Activated CD4-positive, alpha-beta memory T cell treated with anti-CD3 and anti-CD28 coated beads for 36 hours (primary cell): ENCODE measurements at regions of chr5 and their contacts with region 1.

Region 1: GRCh38 chr5:5421961-5422818 is at the start of gene ICE1:
- DNase-seq: peak; percentile 96
- H3K4me3 Mint-ChIP-seq: peak within 1 kb of the TSS; percentile 96
- H3K27ac Mint-ChIP-seq: peak within 1 kb of the TSS; percentile 95
- H3K4me1 Mint-ChIP-seq: peaks cover 14% of the 10 kb centered on the region
- H3K27me3 Mint-ChIP-seq: no peaks in the 10 kb centered on the region
- total RNA-seq, gene ICE1: 25.5 to 26.0 TPM

Region 2: DNA sequence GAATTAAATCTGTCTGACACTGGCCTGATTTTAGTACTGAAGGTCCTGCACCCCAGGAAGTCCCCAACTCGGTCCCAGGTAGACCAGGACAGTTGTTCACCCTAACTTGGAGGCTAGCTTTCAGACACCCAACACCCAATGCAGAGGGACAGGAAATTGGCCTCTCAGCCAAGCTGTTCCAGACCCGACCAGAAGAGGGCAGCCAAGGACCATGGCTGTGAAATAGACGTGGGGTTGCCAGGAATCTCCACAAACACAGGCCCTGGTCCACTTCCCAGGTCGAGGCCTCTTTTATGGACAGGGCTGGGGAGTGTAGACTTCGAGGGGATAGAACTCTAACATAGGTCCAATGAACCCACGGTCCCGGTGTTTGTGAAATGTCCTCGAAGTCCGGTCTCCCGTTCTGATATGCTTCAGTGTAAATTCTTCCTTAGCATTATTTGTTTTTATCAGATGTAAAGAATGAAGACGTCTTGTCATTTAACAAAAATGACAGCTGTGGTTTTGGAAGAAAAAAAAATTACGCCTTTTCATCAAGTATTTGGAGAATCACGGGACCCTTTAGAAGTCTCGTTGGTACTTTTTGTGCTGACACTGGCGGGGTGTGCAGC is 542.4 kb before region 1 on chr5:
- CTCF ChIA-PET with region 1: no interaction called
- POLR2A ChIA-PET with region 1: no interaction called
- intact Hi-C with region 1: loop called (anchors 5 kb)
- DNase-seq: peak; percentile 45
- H3K4me3 Mint-ChIP-seq: no peak overlapping the region
- H3K27ac Mint-ChIP-seq: no peak overlapping the region
- H3K4me1 Mint-ChIP-seq: no peaks in the 10 kb centered on the region
- H3K27me3 Mint-ChIP-seq: no peaks in the 10 kb centered on the region

Region 3: DNA sequence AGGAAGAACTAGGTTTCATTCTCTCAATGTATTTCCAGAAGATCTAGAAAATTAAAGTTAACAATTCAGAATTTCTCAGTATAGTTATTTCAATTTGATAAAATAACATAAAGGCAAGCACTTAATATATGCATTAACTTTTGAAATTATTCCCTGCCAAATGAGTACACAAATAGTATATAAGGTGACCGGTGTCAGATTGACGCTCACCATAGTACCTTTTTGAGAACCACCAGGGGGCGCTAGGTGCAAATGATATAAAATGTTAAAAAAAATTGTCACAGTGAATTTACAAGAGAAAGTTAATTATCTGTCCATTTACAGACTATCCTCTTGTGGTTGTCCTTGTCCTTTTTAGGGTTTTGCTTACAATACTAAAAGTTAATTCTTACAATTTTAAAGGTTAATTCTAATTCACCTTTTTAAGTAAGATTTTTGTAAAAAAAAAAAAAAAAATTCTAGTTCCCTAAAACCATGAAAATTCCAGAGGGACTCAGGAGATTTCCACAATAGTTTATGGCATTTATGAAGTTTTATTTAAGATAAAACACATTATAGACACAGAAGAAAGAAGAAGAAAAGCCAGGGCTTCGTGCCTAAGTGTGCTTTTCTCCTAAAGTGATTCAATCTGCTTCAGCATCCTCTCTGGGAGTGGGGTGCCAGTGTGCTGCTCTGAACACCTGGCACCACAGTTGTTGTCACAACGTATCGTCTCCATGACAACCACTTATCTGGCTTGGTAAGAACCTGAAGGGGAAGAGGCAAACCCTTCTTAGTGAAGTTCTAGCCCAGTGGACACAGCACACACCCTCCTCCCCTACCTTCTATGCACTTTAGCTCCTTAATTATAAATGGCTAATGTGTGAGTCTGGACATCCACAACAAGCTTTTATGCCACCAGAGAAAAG is 280.3 kb before region 1 on chr5:
- CTCF ChIA-PET with region 1: interaction called, 9 read pairs
- POLR2A ChIA-PET with region 1: no interaction called
- intact Hi-C with region 1: loop called (anchors 1 kb)
- DNase-seq: peak; percentile 46
- H3K4me3 Mint-ChIP-seq: no peak overlapping the region
- H3K27ac Mint-ChIP-seq: no peak overlapping the region
- H3K4me1 Mint-ChIP-seq: peaks cover 8% of the 10 kb centered on the region
- H3K27me3 Mint-ChIP-seq: peaks cover 19% of the 10 kb centered on the region

Region 4: GRCh38 chr5:5409151-5409810 is 12.9 kb before region 1 on chr5:
- CTCF ChIA-PET with region 1: no interaction called
- POLR2A ChIA-PET with region 1: no interaction called
- intact Hi-C with region 1: no loop called
- DNase-seq: no peak
- H3K4me3 Mint-ChIP-seq: no peak overlapping the region
- H3K27ac Mint-ChIP-seq: no peak overlapping the region
- H3K4me1 Mint-ChIP-seq: no peaks in the 10 kb centered on the region
- H3K27me3 Mint-ChIP-seq: no peaks in the 10 kb centered on the region

Region 5: DNA sequence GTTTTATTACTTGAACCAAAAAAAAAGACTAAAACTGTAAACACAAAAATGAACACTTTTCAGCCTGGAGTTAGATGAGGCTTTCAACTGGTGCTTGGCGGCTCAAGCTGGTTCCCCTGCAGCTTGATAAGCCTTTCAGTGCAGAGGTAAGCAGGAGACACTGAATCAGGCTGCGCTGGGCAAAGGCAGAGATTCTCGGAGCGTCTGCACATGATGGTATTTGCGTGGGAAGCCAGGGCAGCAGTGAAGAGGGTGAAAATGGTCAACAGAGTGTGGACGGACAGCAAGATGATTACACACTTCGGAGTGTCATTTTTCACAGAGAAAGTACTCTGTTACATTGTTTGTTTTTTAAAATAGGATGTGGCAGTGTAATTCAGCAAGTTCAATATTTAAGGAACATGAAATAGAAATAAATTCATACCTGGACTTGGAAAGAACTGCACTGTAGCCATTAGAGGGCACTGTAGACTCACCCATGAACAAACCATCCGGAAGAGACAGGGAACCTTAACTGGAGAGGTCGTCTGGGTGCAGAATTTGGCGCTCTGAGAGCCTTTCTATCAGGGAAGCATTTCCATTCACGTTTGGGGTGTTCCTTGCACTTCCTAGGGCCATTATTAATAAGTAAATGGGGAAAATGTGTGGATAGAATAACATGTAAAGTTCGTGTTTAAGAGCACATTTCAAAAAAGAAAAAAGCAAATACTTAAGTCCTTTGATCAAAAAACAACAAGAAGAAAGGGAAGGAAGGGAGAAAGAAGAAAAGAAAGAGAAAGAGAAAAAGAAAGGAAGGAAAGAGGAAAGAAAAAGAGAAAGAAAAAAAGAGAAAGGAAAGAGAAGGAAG is 70.1 kb after region 1 on chr5:
- CTCF ChIA-PET with region 1: no interaction called
- POLR2A ChIA-PET with region 1: no interaction called
- intact Hi-C with region 1: loop called (anchors 2 kb)
- DNase-seq: peak; percentile 40
- H3K4me3 Mint-ChIP-seq: no peak overlapping the region
- H3K27ac Mint-ChIP-seq: no peak overlapping the region
- H3K4me1 Mint-ChIP-seq: peaks cover 14% of the 10 kb centered on the region
- H3K27me3 Mint-ChIP-seq: peaks cover 3% of the 10 kb centered on the region

Region 6: DNA sequence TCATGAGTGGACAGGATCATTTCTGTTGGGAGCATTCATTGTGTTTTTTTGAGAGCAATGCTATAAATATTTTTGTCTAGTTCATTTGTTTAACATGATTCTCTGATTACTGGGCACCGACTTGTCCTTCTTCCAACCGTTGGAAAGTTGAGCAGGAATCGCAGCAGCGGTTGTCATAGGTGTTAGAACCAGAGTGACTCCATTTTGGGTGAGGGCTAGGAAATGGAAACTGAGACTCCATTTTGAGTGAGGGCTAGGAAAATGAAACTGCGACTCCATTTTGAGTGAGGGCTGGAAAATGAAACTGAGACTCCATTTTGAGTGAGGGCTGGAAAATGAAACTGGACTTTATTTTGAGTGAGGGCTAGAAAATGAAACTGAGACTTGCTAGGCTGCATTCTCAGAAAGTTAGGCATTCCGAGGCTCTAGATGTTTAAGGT is 100.9 kb after region 1 on chr5:
- CTCF ChIA-PET with region 1: no interaction called
- POLR2A ChIA-PET with region 1: no interaction called
- intact Hi-C with region 1: loop called (anchors 2 kb)
- DNase-seq: peak; percentile 25
- H3K4me3 Mint-ChIP-seq: no peak overlapping the region
- H3K27ac Mint-ChIP-seq: peak overlapping the region; percentile 46
- H3K4me1 Mint-ChIP-seq: peaks cover 23% of the 10 kb centered on the region
- H3K27me3 Mint-ChIP-seq: no peaks in the 10 kb centered on the region

Region 7: DNA sequence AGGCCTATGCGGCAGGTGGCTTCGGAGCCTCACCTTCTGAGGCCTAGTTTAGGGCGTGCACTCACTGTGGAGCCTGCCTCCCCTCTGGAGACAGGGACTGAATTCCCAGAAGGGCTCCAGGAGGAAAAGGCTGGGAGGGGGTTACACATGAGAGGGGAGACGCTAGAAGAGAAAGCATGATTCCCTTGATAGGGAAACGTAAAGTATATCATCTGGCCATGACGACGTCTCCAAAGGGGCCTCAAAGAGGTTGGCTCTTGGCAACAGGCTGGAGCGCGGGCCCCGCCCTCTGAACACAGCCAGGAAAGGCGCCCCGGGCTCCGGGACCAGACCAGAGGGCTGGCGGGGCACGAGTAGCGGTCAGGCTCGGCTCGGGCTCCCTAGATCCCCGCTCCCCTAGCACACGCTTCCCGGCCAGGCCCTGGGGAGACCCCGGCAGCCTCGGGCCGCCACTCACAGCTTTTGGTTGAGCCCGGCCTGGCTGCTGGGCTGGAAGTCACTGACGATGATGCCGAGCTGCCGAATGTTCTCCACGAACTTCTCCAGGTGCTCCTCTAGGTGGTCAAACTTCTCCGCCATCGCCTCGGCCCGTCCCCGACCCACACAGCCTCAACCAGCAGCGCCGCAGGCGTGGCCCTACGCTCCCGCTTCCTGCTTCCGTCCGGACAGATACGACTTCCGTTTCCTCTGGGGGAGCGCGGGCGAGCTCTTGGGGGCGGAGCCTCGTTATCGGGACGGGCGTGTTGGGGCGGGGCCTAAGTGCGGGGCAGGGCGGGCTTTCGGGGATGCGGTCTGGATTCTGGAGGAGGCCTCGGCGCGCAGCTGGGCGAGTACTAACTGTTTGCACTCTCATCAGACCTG is 955.9 kb after region 1 on chr5 and contains the start of gene MED10:
- CTCF ChIA-PET with region 1: no interaction called
- POLR2A ChIA-PET with region 1: interaction called, 3 read pairs
- intact Hi-C with region 1: loop called (anchors 1 kb)
- DNase-seq: peak; percentile 98
- H3K4me3 Mint-ChIP-seq: peak within 1 kb of the TSS; percentile 92
- H3K27ac Mint-ChIP-seq: peak within 1 kb of the TSS; percentile 98
- H3K4me1 Mint-ChIP-seq: peaks cover 37% of the 10 kb centered on the region
- H3K27me3 Mint-ChIP-seq: no peaks in the 10 kb centered on the region
- total RNA-seq, gene MED10: 49.8 to 51.6 TPM

Region 8: GRCh38 chr5:6632917-6633468 is 1210.8 kb after region 1 on chr5 and contains the starts of genes NSUN2 and SRD5A1:
- CTCF ChIA-PET with region 1: no interaction called
- POLR2A ChIA-PET with region 1: no interaction called
- intact Hi-C with region 1: loop called (anchors 1 kb)
- DNase-seq: peak; percentile 92
- H3K4me3 Mint-ChIP-seq: peak within 1 kb of the TSS; percentile 97
- H3K27ac Mint-ChIP-seq: peak within 1 kb of the TSS; percentile 95
- H3K4me1 Mint-ChIP-seq: peaks cover 40% of the 10 kb centered on the region
- H3K27me3 Mint-ChIP-seq: no peaks in the 10 kb centered on the region
- total RNA-seq, gene NSUN2: 78.5 to 86.7 TPM
- total RNA-seq, gene SRD5A1: 9.5 to 11.0 TPM